ENCODE measurements at regions of chr5 and their contacts with region 1.

Region 1: DNA sequence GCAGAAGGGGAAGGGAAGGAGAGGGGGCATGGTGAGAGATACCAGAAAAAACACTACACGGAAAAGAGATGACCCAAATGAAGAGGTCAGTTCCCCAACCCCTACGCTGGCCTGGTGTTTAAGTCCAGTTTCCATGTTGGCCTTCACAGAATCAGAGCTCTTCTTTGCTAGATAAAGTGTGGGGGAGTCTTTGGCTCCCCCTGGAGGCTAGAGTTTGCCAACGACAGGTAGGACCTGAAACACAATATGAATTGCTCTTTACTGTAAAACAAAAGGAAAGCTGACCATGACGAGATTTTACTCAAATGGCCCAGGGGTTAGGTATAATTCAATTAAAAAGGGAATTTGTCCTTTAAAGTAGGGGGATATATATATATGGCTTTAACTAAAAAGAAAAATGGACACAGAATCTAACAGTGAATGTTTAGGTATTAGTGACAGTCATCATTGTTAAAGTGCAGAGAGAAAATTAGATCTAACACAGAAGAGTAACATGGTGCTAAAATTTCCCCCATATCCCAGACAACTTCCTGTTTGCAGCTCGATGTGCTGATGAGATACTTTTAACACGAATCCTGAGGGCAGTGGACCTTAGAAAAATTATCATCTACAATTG is 92.0 kb downstream of the SV2C start:
- DNase-seq: peak; percentile 80
- H3K4me3 ChIP-seq: peak overlapping the region in 1 of 2 experiments; percentile 6; a peak in 2 of 4 replicates
- H3K27ac ChIP-seq: peak overlapping the region in 1 of 2 experiments; percentile 85; a peak in 2 of 4 replicates
- H3K4me1 ChIP-seq: peaks cover 0 to 37% of the 10 kb centered on the region in 2 experiments; a peak in 2 of 4 replicates
- H3K27me3 ChIP-seq: no peaks in the 10 kb centered on the region
- CTCF ChIP-seq: peak; percentile 89
- EP300 ChIP-seq: no peak
- RAD21 ChIP-seq: peak; percentile 92

Region 2: GRCh38 chr5:75734913-75735789 is 440.0 kb before region 1 on chr5:
- CTCF ChIA-PET with region 1: interaction called, 33 read pairs
- POLR2A ChIA-PET with region 1: no interaction called
- DNase-seq: peak; percentile 63
- H3K4me3 ChIP-seq: no peak overlapping the region
- H3K27ac ChIP-seq: no peak overlapping the region
- H3K4me1 ChIP-seq: no peaks in the 10 kb centered on the region; a peak in 1 of 4 replicates
- H3K27me3 ChIP-seq: no peaks in the 10 kb centered on the region
- CTCF ChIP-seq: peak; percentile 54
- EP300 ChIP-seq: no peak
- RAD21 ChIP-seq: peak; percentile 92

Region 3: DNA sequence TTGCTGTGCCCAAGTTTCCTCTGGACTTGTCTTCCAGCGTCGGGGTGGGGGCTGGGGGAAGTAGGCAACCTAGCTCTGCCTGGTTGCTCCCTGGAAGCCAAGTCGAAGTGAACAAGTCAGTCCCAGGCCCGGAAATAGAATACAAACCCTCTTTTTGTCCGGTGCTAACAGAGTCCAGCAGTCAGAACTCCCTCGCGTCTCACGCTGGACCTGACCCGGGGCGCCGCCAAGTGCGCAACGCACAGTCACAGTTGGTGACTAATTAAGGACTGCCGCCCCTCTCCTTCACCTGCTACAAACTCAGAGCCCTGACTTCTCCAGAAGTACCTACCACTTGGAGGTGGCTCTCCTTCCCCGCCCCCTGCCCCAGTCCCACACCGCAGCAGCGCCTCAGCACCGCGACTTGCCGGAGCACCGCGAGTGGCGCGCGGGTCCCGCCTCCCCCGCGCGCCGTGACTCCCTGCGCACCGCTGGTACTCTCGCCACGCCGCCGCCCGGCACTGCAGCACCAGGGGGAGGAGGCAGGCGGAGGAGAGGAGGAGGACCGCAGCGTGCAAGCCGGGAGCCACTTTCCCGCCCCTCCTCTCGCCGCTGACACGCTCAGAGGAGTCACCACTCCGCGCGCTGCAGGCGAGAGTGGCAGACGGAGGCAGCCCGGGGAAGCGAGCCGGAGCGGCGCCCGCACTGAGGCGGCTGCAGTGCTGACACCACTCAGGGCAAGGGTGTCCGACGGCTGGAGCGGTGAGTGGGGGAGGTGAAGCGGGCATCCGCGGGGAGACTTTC is 92.2 kb before region 1 on chr5 and contains the start of gene SV2C:
- CTCF ChIA-PET with region 1: interaction called, 79 read pairs
- POLR2A ChIA-PET with region 1: interaction called, 28 read pairs
- DNase-seq: peak; percentile 89
- H3K4me3 ChIP-seq: peak within 1 kb of the TSS; percentile 16 to 55; a peak in 3 of 4 replicates
- H3K27ac ChIP-seq: peak within 1 kb of the TSS in 1 of 2 experiments; percentile 98; a peak in 2 of 4 replicates
- H3K4me1 ChIP-seq: peaks cover 0 to 2% of the 10 kb centered on the region in 2 experiments; a peak in 2 of 4 replicates
- H3K27me3 ChIP-seq: peaks cover 28% of the 10 kb centered on the region
- CTCF ChIP-seq: no peak
- EP300 ChIP-seq: no peak
- RAD21 ChIP-seq: no peak
- polyA plus RNA-seq, gene SV2C: 0.05 and 0.13 TPM in 2 replicates

Region 4: GRCh38 chr5:76125888-76126287 is 49.3 kb before region 1 on chr5:
- CTCF ChIA-PET with region 1: interaction called, 12 read pairs
- POLR2A ChIA-PET with region 1: no interaction called
- DNase-seq: no peak
- H3K4me3 ChIP-seq: no peak overlapping the region
- H3K27ac ChIP-seq: no peak overlapping the region
- H3K4me1 ChIP-seq: peaks cover 0 to 22% of the 10 kb centered on the region in 2 experiments; a peak in 2 of 4 replicates
- H3K27me3 ChIP-seq: no peaks in the 10 kb centered on the region
- CTCF ChIP-seq: no peak
- EP300 ChIP-seq: no peak
- RAD21 ChIP-seq: no peak

Region 5: GRCh38 chr5:76155536-76155935 is 19.6 kb before region 1 on chr5:
- CTCF ChIA-PET with region 1: interaction called, 21 read pairs
- POLR2A ChIA-PET with region 1: no interaction called
- DNase-seq: no peak
- H3K4me3 ChIP-seq: no peak overlapping the region
- H3K27ac ChIP-seq: no peak overlapping the region
- H3K4me1 ChIP-seq: peaks cover 0 to 13% of the 10 kb centered on the region in 2 experiments; a peak in 1 of 4 replicates
- H3K27me3 ChIP-seq: no peaks in the 10 kb centered on the region
- CTCF ChIP-seq: no peak
- EP300 ChIP-seq: no peak
- RAD21 ChIP-seq: no peak

Region 6: DNA sequence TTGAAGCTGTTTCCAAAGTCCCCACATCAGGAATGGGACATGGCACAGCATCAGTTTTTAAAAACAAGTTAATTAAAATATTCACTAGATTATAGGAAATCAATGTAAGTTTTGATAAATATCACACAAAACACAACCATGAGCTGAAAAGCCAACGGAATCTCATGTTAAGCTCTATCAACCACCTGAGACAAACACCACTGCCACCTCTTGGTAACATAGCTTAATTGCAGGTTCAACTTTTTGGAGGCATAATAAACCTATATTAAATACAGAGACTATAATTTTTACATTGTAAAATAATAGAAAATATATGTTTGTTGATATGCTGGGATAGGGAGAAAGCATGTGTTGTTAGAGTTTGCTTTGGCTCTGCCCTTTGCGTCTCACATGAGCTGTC is 34.1 kb after region 1 on chr5:
- CTCF ChIA-PET with region 1: interaction called, 12 read pairs
- POLR2A ChIA-PET with region 1: no interaction called
- DNase-seq: no peak
- H3K4me3 ChIP-seq: no peak overlapping the region
- H3K27ac ChIP-seq: no peak overlapping the region
- H3K4me1 ChIP-seq: peaks cover 0 to 15% of the 10 kb centered on the region in 2 experiments; a peak in 1 of 4 replicates
- H3K27me3 ChIP-seq: no peaks in the 10 kb centered on the region; the same call in 1 of the 2 replicates
- CTCF ChIP-seq: peak; percentile 23; the same call in 1 of the 2 replicates
- EP300 ChIP-seq: no peak
- RAD21 ChIP-seq: peak; percentile 16; the same call in 1 of the 2 replicates

Measured in SK-N-SH (cell line).